ENCODE measurements at regions of chr16 and their contacts with region 1.

Region 1: GRCh38 chr16:75385507-75386152 is 47.7 kb downstream of the CFDP1 start:
- DNase-seq: peak; percentile 26
- ATAC-seq: peak; percentile 11
- H3K4me3 Mint-ChIP-seq: no peak overlapping the region
- H3K27ac Mint-ChIP-seq: no peak overlapping the region
- H3K4me1 Mint-ChIP-seq: peaks cover 8% of the 10 kb centered on the region
- H3K27me3 Mint-ChIP-seq: peaks cover 14% of the 10 kb centered on the region

Region 2: DNA sequence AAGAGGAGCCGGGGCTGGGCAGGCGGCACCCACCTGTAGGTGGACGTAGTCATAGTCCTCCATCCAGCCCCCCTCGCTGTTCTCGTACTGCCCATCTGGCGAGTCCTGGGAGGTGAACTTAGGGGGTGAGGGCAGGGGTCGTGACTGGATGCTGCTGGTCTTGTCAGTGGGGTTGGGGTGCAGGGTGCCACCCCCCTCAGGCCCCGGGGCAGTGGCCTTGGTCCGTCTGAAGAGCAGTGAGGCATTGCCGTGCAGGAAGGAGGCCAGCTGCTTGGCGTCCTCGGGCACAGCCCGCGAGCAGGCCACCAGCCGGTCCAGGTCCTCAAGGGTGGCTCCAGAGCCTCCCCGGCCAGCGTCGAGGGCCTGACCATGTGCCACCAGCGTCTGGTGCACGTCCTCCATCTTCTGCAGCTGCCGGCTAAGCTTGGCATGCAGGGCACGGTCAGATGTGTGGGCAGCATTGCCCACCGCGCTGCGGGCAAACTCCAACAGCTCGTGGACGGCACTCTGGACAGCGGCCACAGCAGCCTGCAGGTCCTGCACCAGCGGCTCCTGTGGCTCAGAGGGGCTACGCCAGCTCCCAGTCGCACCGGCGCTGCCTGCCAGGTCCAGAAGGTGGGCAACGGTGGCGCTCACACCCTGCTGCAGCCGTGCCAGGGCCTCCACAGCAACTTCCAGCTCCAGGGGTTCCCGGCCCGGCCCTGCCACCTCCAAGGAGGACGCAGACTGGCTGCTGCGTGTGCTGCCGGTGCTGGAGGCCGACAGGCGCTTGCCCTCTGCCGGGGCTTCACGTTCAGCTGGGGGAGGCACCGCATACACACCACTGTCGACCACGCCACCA is 150.6 kb before region 1 on chr16:
- CTCF ChIA-PET with region 1: interaction called, 134 read pairs
- POLR2A ChIA-PET with region 1: interaction called, 4 read pairs
- DNase-seq: no peak
- ATAC-seq: no peak
- H3K4me3 Mint-ChIP-seq: no peak overlapping the region
- H3K27ac Mint-ChIP-seq: no peak overlapping the region
- H3K4me1 Mint-ChIP-seq: peaks cover 1% of the 10 kb centered on the region
- H3K27me3 Mint-ChIP-seq: peaks cover 5% of the 10 kb centered on the region

Region 3: GRCh38 chr16:75506567-75506966 is 120.9 kb after region 1 on chr16:
- CTCF ChIA-PET with region 1: no interaction called
- POLR2A ChIA-PET with region 1: no interaction called
- DNase-seq: no peak
- ATAC-seq: no peak
- H3K4me3 Mint-ChIP-seq: no peak overlapping the region
- H3K27ac Mint-ChIP-seq: no peak overlapping the region
- H3K4me1 Mint-ChIP-seq: no peaks in the 10 kb centered on the region
- H3K27me3 Mint-ChIP-seq: peaks cover 25% of the 10 kb centered on the region

Measured in activated CD8-positive, alpha-beta T cell treated with anti-CD3 and anti-CD28 coated beads, Interleukin-2, amount 10 ng/mL, durations not matched to agents 7 days and 5 days (primary cell).